WTC11 (cell line): ENCODE measurements at regions of chr20 and their contacts with region 1.

Region 1: GRCh38 chr20:45436732-45437391 is 20.9 kb downstream of the PIGT start:
- DNase-seq: peak; percentile 90
- ATAC-seq: peak; percentile 97
- H3K4me3 Mint-ChIP-seq: peak overlapping the region; percentile 82
- H3K27ac Mint-ChIP-seq: no peak overlapping the region
- H3K4me1 Mint-ChIP-seq: peaks cover 16% of the 10 kb centered on the region
- H3K27me3 Mint-ChIP-seq: peaks cover 5% of the 10 kb centered on the region; the same call in 1 of the 2 replicates
- CTCF ChIP-seq: peak; percentile 92

Region 2: GRCh38 chr20:45300961-45301360 is 135.9 kb before region 1 on chr20:
- CTCF ChIA-PET with region 1: interaction called, 18 read pairs
- POLR2A ChIA-PET with region 1: no interaction called
- DNase-seq: peak; percentile 82
- ATAC-seq: peak; percentile 96
- H3K4me3 Mint-ChIP-seq: no peak overlapping the region
- H3K27ac Mint-ChIP-seq: no peak overlapping the region
- H3K4me1 Mint-ChIP-seq: peaks cover 12% of the 10 kb centered on the region
- H3K27me3 Mint-ChIP-seq: peaks cover 10% of the 10 kb centered on the region
- CTCF ChIP-seq: peak; percentile 38; the same call in 1 of the 2 replicates

Region 3: DNA sequence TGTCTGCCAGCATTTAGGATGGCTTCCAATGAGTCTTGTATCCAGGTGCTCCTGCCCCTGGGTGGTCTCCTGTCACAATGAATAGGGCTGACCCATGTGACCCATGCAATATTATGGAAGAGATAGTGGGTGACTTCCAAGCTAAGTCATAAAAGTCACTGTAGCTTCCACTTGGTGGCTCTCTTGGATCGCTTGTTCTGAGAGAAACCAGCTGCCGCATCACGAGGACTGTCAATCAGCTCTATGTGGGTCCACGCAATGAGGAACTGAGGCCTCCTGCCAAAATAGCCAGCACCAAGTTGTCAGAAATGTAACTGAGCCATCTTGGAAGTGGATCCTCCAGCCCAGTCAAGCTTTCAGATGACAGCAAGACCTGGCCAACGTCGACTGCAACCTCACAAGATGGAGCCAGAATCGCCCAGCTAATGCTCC is 113.9 kb before region 1 on chr20:
- CTCF ChIA-PET with region 1: interaction called, 76 read pairs
- POLR2A ChIA-PET with region 1: interaction called, 4 read pairs
- DNase-seq: no peak
- ATAC-seq: peak; percentile 49
- H3K4me3 Mint-ChIP-seq: no peak overlapping the region
- H3K27ac Mint-ChIP-seq: no peak overlapping the region
- H3K4me1 Mint-ChIP-seq: peaks cover 2% of the 10 kb centered on the region; the same call in 1 of the 2 replicates
- H3K27me3 Mint-ChIP-seq: no peaks in the 10 kb centered on the region
- CTCF ChIP-seq: no peak

Region 4: GRCh38 chr20:45362804-45363610 is 73.9 kb before region 1 on chr20 and contains the start of gene SYS1:
- CTCF ChIA-PET with region 1: interaction called, 82 read pairs
- POLR2A ChIA-PET with region 1: interaction called, 3 read pairs
- DNase-seq: peak; percentile 99
- ATAC-seq: peak; percentile 89
- H3K4me3 Mint-ChIP-seq: peak within 1 kb of the TSS; percentile 97
- H3K27ac Mint-ChIP-seq: peak within 1 kb of the TSS; percentile 98
- H3K4me1 Mint-ChIP-seq: peaks cover 25% of the 10 kb centered on the region
- H3K27me3 Mint-ChIP-seq: no peaks in the 10 kb centered on the region
- CTCF ChIP-seq: peak; percentile 77
- total RNA-seq, gene SYS1: 15.4 to 20.1 TPM (median 16.4 TPM) in 3 replicates

Region 5: GRCh38 chr20:45415774-45416637 is 20.9 kb before region 1 on chr20 and contains the start of gene PIGT:
- CTCF ChIA-PET with region 1: interaction called, 11 read pairs
- POLR2A ChIA-PET with region 1: no interaction called
- DNase-seq: peak; percentile 82
- ATAC-seq: peak; percentile 97
- H3K4me3 Mint-ChIP-seq: peak within 1 kb of the TSS; percentile 91
- H3K27ac Mint-ChIP-seq: peak within 1 kb of the TSS; percentile 71
- H3K4me1 Mint-ChIP-seq: peaks cover 10% of the 10 kb centered on the region
- H3K27me3 Mint-ChIP-seq: no peaks in the 10 kb centered on the region
- CTCF ChIP-seq: no peak
- total RNA-seq, gene PIGT: 63.7 to 67.7 TPM (median 67.7 TPM) in 3 replicates

Region 6: DNA sequence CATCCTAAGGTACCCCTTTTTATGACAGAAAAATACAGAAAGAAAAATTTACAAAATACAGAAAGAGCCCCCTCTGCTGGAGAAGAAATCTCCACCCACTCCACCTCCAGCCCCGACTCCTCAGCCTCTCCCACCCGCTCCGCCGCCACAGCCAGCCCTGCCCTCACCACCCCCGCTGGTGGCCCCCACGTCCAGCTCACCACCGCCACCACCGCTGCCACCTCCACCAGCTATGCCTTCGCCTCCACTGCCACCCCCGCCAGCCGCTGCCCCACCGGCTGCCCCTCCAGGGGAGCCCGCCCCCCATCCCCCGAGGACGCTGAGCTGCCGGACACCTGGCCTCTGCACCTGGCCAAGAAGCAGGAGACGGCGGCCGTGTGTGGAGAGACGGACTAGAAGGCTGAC is 50.4 kb after region 1 on chr20:
- CTCF ChIA-PET with region 1: interaction called, 36 read pairs
- POLR2A ChIA-PET with region 1: no interaction called
- DNase-seq: peak; percentile 58
- ATAC-seq: peak; percentile 82
- H3K4me3 Mint-ChIP-seq: peak overlapping the region; percentile 63
- H3K27ac Mint-ChIP-seq: no peak overlapping the region
- H3K4me1 Mint-ChIP-seq: peaks cover 34% of the 10 kb centered on the region
- H3K27me3 Mint-ChIP-seq: no peaks in the 10 kb centered on the region
- CTCF ChIP-seq: peak; percentile 55

Region 7: DNA sequence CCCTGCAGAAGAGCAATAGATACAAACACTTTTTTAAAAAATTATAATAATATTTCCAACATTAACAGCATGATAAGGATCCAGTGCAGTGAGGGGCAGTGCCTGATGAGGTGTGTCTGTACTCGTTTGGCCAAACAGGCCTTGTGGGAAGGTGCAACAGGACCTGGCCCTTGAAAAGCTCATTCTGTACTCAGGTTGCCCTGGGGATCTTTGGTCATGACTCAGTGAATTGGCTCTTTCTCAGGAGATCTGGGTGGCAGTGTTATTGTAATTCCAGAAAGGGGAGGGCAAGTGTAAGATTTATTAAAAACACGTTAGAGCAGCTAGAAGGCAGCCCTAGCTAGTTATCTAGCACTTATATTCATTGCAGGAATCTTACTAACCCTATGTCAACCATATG is 81.4 kb after region 1 on chr20:
- CTCF ChIA-PET with region 1: no interaction called
- POLR2A ChIA-PET with region 1: no interaction called
- DNase-seq: no peak
- ATAC-seq: no peak
- H3K4me3 Mint-ChIP-seq: no peak overlapping the region
- H3K27ac Mint-ChIP-seq: no peak overlapping the region
- H3K4me1 Mint-ChIP-seq: no peaks in the 10 kb centered on the region
- H3K27me3 Mint-ChIP-seq: no peaks in the 10 kb centered on the region; the same call in 1 of the 2 replicates
- CTCF ChIP-seq: no peak